Panc1 (cell line): ENCODE measurements at regions of chr5 and their contacts with region 1.

Region 1: GRCh38 chr5:14727428-14727865 is 62.9 kb downstream of the OTULIN start:
- DNase-seq: peak; percentile 78
- ATAC-seq: peak; percentile 80
- H3K4me3 ChIP-seq: no peak overlapping the region
- H3K27ac ChIP-seq: no peak overlapping the region
- H3K4me1 ChIP-seq: no peaks in the 10 kb centered on the region
- H3K27me3 ChIP-seq: no peaks in the 10 kb centered on the region
- CTCF ChIP-seq: peak; percentile 96

Region 2: DNA sequence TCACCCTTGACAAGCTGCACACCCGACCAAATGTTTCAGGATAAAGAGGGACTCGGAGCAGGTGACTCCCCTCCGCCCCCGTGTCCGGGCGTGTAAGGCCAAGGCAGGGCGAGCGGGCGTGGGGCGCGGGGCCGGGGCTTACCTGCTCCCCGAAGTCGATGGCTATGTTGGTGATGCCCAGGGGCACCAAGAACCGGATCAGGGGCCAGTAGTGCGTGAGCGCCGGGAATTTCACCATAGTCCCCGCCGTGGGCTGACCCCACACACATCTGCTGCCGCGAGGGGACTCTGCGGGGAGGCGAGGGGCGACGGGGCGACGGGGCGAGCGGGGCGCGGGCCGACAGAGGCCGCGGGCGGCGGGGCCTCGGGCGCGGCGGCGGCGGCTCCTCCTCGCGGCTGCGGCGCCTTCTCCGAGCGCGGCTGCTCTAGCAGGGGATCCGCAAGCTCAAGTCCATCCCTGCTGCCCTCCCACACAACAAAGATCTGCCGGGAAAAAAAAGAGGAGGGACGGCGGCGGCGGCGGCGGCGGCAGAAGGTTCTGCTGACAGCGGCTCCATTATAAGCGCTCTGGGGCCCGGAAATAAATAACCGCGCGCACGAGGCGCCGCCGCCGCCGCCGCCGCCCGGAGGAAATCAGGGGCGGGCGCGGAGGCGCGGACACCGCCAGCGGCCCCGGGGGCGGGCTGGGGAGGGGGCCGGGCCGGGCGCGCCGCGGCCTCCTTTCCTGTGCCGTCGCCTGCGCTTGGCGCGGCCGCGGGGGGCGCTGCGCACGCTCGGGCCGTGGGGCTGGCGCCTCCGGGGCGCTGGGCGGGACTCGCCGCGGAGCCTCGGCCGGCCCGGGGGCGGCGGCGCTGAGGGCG is 144.0 kb after region 1 on chr5 and contains the start of gene ANKH:
- CTCF ChIA-PET with region 1: no interaction called
- POLR2A ChIA-PET with region 1: no interaction called
- in situ Hi-C with region 1: no loop called
- intact Hi-C with region 1: loop called (anchors 5 kb)
- DNase-seq: no peak
- ATAC-seq: peak; percentile 98
- H3K4me3 ChIP-seq: peak within 1 kb of the TSS; percentile 46 to 59
- H3K27ac ChIP-seq: no peak within 1 kb of the TSS
- H3K4me1 ChIP-seq: peaks cover 4% of the 10 kb centered on the region; the same call in 1 of the 2 replicates
- H3K27me3 ChIP-seq: peaks cover 24% of the 10 kb centered on the region
- CTCF ChIP-seq: peak; percentile 87
- total RNA-seq, gene ANKH: 11.2 TPM

Region 3: GRCh38 chr5:15425766-15426165 is 698.3 kb after region 1 on chr5:
- CTCF ChIA-PET with region 1: no interaction called
- POLR2A ChIA-PET with region 1: no interaction called
- in situ Hi-C with region 1: no loop called
- intact Hi-C with region 1: loop called (anchors 10 kb)
- DNase-seq: no peak
- ATAC-seq: no peak
- H3K4me3 ChIP-seq: no peak overlapping the region
- H3K27ac ChIP-seq: no peak overlapping the region
- H3K4me1 ChIP-seq: no peaks in the 10 kb centered on the region
- H3K27me3 ChIP-seq: no peaks in the 10 kb centered on the region
- CTCF ChIP-seq: no peak